ENCODE measurements at regions of chr11 and their contacts with region 1.

Region 1: GRCh38 chr11:86990515-86990914 is 35.3 kb upstream of the FZD4 start:
- DNase-seq: no peak
- H3K4me3 ChIP-seq: no peak overlapping the region
- H3K27ac ChIP-seq: no peak overlapping the region
- H3K4me1 ChIP-seq: no peaks in the 10 kb centered on the region
- H3K27me3 ChIP-seq: no peaks in the 10 kb centered on the region

Region 2: DNA sequence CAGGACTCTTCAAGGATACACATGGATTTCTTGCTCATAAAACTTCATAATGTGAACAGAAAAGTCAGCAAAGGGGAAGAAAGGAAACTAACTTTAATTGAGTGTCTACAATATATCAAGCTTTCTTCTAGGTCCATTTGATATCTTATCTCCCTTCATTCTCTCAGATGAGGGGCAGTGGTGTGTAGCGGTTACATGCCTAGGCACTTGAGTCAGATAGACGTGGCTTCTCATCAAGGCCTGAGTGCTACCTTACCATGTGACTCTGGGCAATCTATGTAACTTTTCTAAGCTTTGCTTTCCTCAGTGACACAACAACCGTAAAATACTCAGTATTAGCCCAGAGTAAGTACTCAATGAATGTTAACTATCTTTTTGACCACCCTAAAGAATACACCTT is 10.1 kb before region 1 on chr11:
- CTCF ChIA-PET with region 1: interaction called, 10 read pairs
- POLR2A ChIA-PET with region 1: interaction called, 3 read pairs
- DNase-seq: no peak
- H3K4me3 ChIP-seq: no peak overlapping the region
- H3K27ac ChIP-seq: no peak overlapping the region
- H3K4me1 ChIP-seq: no peaks in the 10 kb centered on the region
- H3K27me3 ChIP-seq: no peaks in the 10 kb centered on the region

Region 3: DNA sequence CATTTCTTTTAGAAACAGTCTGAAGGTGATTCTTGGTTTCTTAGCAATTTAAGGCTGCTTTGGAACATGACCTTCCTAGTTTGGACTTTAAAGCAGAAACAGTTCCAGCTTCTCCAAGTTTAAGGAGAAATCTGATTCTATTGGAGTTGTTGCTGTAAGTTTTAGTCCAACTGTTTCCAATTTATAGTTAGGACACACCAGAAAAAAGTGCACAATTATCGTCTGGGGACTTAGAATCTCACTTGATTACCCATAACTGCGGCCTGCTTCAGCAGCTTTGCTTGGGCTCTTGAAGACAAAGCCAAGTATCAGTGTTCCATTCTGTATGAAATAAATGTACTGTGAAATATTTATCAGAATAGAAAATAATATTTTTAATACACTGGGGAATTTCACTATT is 293.8 kb after region 1 on chr11:
- CTCF ChIA-PET with region 1: interaction called, 20 read pairs
- POLR2A ChIA-PET with region 1: interaction called, 3 read pairs
- DNase-seq: no peak
- H3K4me3 ChIP-seq: no peak overlapping the region
- H3K27ac ChIP-seq: no peak overlapping the region
- H3K4me1 ChIP-seq: no peaks in the 10 kb centered on the region
- H3K27me3 ChIP-seq: no peaks in the 10 kb centered on the region

Region 4: GRCh38 chr11:87290304-87290922 is 299.9 kb after region 1 on chr11:
- CTCF ChIA-PET with region 1: interaction called, 20 read pairs
- POLR2A ChIA-PET with region 1: no interaction called
- DNase-seq: peak; percentile 63 to 79 (median 73)
- H3K4me3 ChIP-seq: no peak overlapping the region
- H3K27ac ChIP-seq: no peak overlapping the region
- H3K4me1 ChIP-seq: no peaks in the 10 kb centered on the region
- H3K27me3 ChIP-seq: no peaks in the 10 kb centered on the region

Measured in common myeloid progenitor, CD34-positive (primary cell).